ENCODE measurements at regions of chr9 and their contacts with region 1.

Region 1: DNA sequence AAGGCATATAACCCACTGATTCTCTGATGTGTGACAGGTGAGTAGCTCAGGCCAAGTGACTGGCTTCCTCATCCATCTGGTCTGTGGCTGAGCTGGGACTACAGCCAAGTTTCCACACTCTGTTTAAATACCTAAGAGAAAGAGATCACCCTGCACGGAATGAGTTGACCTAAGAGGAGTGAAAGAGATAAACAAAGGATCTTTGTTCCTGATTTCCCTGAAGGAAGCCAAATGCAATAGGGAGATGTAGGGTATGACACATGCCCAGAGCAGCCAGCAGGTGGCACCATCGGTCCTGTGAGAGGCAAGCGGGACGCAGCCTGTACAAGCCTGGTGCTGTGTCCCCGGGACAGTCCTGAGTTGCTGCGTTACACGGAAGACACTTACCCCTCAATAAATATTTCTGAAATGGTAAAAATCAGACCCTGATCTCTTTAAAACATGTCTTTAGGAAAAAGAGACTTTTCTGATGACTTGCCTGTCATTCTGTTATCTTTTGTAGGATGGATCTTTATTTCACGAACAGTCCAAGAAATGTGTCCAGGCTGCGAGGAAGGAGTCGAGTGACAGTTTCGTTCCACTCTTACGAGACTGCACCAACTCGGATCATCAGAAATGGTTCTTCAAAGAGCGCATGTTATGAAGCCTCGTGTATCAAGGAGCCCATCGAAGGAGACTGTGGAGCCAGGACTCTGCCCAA is 41.1 kb downstream of the GALNT12 start:
- DNase-seq: peak; percentile 91
- ATAC-seq: peak; percentile 96
- H3K4me3 Mint-ChIP-seq: no peak overlapping the region
- H3K27ac Mint-ChIP-seq: no peak overlapping the region
- H3K4me1 Mint-ChIP-seq: peaks cover 9% of the 10 kb centered on the region
- H3K27me3 Mint-ChIP-seq: no peaks in the 10 kb centered on the region

Region 2: GRCh38 chr9:98707166-98708102 is 141.2 kb before region 1 on chr9:
- CTCF ChIA-PET with region 1: no interaction called
- POLR2A ChIA-PET with region 1: no interaction called
- intact Hi-C with region 1: no loop called
- DNase-seq: peak; percentile 61
- ATAC-seq: peak; percentile 71
- H3K4me3 Mint-ChIP-seq: no peak overlapping the region
- H3K27ac Mint-ChIP-seq: no peak overlapping the region
- H3K4me1 Mint-ChIP-seq: no peaks in the 10 kb centered on the region
- H3K27me3 Mint-ChIP-seq: peaks cover 50% of the 10 kb centered on the region

Region 3: DNA sequence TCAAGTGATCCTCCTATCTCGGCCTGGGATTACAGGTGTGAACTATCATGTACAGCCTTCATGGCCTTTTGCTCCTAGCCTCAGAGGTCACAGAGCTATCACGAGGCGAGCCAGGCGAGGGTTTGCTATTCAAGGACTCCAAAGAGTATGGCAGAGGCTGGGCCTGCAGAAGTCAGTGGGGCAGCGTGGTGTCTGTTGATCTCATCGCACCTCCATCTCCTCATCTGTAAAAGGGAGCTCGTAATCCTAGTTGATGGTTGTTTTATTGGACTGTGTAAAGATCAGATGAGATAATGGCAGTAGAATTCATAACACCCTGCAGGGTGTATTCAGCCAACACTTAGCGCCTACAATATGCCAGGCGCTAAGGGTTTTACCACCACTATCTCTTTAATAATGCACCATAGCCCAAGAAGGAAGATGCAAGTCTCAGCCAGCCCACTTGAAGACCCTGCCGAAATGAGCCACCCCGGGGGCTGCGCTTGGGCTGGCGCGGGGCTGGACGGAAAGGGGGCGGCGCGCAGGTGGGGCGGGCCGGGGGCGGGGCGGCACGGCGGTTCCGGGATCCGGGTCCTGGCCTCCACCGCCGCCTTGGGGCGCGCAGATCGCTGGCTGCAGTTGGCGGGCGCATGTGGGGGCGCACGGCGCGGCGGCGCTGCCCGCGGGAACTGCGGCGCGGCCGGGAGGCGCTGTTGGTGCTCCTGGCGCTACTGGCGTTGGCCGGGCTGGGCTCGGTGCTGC is 41.4 kb before region 1 on chr9 and contains the start of gene GALNT12:
- CTCF ChIA-PET with region 1: interaction called, 12 read pairs
- POLR2A ChIA-PET with region 1: no interaction called
- intact Hi-C with region 1: no loop called
- DNase-seq: peak; percentile 74
- ATAC-seq: peak; percentile 63
- H3K4me3 Mint-ChIP-seq: peak within 1 kb of the TSS; percentile 81
- H3K27ac Mint-ChIP-seq: peak within 1 kb of the TSS; percentile 65
- H3K4me1 Mint-ChIP-seq: peaks cover 35% of the 10 kb centered on the region
- H3K27me3 Mint-ChIP-seq: peaks cover 3% of the 10 kb centered on the region
- total RNA-seq, gene GALNT12: 10.2 to 12.7 TPM

Region 4: DNA sequence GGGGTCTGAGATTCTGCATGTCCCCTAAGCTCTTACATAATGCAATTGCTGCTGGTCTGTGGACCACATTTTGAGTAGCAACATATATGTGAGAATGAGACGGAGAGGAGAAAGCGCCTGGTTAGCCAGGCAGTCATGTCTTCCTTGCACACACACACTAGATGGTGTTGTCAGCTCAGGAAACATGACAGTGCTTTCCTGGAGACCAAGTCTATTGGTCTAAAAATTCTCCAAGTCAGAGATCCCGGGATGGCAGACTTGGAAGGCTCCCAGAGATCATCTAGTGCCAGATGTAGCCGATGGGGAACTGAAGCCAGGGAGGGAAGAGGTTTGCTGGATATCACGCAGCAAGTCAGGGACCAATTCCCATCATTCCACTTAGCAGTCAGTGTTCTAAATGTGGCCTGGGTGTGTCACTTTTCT is 12.3 kb after region 1 on chr9:
- CTCF ChIA-PET with region 1: interaction called, 11 read pairs
- POLR2A ChIA-PET with region 1: no interaction called
- intact Hi-C with region 1: no loop called
- DNase-seq: no peak
- ATAC-seq: no peak
- H3K4me3 Mint-ChIP-seq: no peak overlapping the region
- H3K27ac Mint-ChIP-seq: no peak overlapping the region
- H3K4me1 Mint-ChIP-seq: no peaks in the 10 kb centered on the region
- H3K27me3 Mint-ChIP-seq: peaks cover 2% of the 10 kb centered on the region

Region 5: GRCh38 chr9:98974994-98975712 is 126.6 kb after region 1 on chr9:
- CTCF ChIA-PET with region 1: interaction called, 8 read pairs
- POLR2A ChIA-PET with region 1: no interaction called
- intact Hi-C with region 1: loop called in 1 of 2 experiments (anchors 1 kb)
- DNase-seq: peak; percentile 89
- ATAC-seq: peak; percentile 99
- H3K4me3 Mint-ChIP-seq: no peak overlapping the region
- H3K27ac Mint-ChIP-seq: no peak overlapping the region
- H3K4me1 Mint-ChIP-seq: peaks cover 5% of the 10 kb centered on the region
- H3K27me3 Mint-ChIP-seq: peaks cover 15% of the 10 kb centered on the region

Region 6: DNA sequence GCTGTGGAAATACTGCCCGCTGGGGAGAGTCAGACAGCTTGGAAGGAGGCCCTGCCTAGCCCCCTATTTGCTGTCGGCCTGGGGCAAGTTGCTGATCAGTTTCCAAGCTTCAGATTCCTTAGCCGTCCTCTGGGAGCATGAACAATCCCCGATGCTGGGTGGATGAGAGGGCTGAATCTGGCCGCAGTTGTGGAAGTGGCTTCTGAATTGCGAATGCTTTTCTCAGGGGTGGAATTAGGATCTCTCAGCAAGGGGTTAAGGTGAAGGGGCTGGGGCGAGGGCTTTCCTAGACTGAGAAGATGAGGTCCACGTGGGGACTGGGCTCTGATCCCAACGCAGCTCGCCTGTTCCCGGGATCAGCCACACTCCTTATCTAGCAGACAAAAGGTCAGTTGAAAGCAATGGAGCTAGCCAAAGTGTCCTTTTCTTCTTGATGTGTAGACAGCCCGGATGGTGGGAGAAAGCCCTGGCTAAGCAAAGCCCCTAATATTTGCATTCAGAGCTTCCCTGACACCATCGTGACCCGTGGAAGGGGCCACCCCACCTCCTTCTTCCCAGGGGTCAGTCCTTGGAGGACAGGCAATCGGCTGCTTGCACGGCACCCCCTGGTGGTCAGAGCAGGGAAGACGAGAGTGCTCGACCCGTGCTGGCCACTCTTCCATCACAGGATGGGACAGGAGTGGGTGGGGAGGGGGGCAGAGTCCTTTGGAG is 150.0 kb after region 1 on chr9:
- CTCF ChIA-PET with region 1: interaction called, 16 read pairs
- POLR2A ChIA-PET with region 1: no interaction called
- intact Hi-C with region 1: loop called (anchors 1 kb)
- DNase-seq: peak; percentile 79
- ATAC-seq: peak; percentile 75
- H3K4me3 Mint-ChIP-seq: no peak overlapping the region
- H3K27ac Mint-ChIP-seq: no peak overlapping the region
- H3K4me1 Mint-ChIP-seq: peaks cover 19% of the 10 kb centered on the region
- H3K27me3 Mint-ChIP-seq: no peaks in the 10 kb centered on the region

Region 7: DNA sequence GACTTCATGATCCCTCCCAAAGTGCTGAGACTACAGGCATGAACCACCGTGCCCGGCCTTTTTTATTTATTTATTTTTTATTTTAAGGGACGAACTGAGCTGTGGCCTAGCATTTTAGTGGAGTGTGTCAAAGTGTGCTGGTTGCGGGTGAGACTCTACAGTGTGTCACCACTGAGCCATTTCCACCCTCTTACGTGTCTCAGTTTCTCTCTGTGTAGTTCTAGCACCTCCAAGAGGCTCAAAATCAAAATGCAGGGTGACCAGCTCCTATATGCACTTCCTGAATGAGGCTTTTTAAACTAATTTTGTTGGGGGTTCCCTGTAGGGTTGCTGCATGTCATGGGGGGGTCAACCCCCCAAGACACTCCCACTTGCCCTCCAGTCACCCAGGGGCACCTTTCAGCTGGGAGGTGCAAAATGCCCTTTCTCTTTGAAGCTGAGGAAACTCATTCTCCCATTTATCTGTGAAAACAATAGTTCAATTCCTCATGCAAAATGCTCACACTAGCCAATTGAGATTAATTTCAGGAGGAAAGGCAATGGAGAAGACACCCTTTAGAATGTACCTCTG is 164.4 kb after region 1 on chr9:
- CTCF ChIA-PET with region 1: interaction called, 33 read pairs
- POLR2A ChIA-PET with region 1: no interaction called
- intact Hi-C with region 1: loop called in 1 of 2 experiments (anchors 1 kb)
- DNase-seq: peak; percentile 32
- ATAC-seq: peak; percentile 90
- H3K4me3 Mint-ChIP-seq: no peak overlapping the region
- H3K27ac Mint-ChIP-seq: peak overlapping the region; percentile 86
- H3K4me1 Mint-ChIP-seq: peaks cover 20% of the 10 kb centered on the region
- H3K27me3 Mint-ChIP-seq: no peaks in the 10 kb centered on the region

Region 8: GRCh38 chr9:99023831-99024230 is 175.2 kb after region 1 on chr9:
- CTCF ChIA-PET with region 1: no interaction called
- POLR2A ChIA-PET with region 1: no interaction called
- intact Hi-C with region 1: no loop called
- DNase-seq: no peak
- ATAC-seq: no peak
- H3K4me3 Mint-ChIP-seq: no peak overlapping the region
- H3K27ac Mint-ChIP-seq: no peak overlapping the region
- H3K4me1 Mint-ChIP-seq: peaks cover 18% of the 10 kb centered on the region
- H3K27me3 Mint-ChIP-seq: no peaks in the 10 kb centered on the region

Region 9: DNA sequence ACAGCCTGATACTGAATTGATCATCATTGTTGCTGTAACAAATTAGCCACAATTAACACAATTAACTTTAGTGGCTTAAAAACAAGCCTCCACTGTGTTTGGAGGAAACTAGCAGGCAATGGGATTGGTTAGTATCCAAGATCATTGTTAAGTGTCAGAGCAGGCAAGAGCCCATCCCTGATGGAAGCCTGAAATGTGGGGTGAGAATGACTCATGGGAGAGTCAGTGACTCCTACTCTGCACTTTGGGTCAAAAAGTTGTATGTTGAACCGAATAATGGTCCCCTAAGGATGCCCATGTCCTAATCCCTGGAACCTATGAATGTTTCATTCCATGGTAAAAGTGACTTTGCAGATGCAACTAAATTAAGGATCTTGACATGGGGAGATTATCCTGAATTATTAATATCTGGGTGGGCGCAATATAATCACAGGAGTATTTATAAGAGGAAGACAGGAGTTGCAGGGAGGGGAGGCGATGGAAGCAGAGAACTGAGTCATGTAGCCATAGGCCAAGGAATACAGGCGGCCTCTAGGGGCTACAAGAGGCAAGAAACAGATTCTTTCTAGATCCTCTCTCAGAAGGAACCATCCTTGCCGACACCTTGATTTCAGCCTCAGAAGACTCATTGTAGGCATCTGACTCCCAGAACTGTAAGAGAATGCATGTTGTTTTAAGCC is 344.3 kb after region 1 on chr9:
- CTCF ChIA-PET with region 1: no interaction called
- POLR2A ChIA-PET with region 1: no interaction called
- intact Hi-C with region 1: no loop called
- DNase-seq: no peak
- ATAC-seq: no peak
- H3K4me3 Mint-ChIP-seq: no peak overlapping the region
- H3K27ac Mint-ChIP-seq: no peak overlapping the region
- H3K4me1 Mint-ChIP-seq: peaks cover 4% of the 10 kb centered on the region
- H3K27me3 Mint-ChIP-seq: peaks cover 11% of the 10 kb centered on the region

Measured in activated CD4-positive, alpha-beta T cell treated with anti-CD3 and anti-CD28 coated beads for 36 hours (primary cell).